ENCODE measurements at regions of chr19 and their contacts with region 1.

Region 1: DNA sequence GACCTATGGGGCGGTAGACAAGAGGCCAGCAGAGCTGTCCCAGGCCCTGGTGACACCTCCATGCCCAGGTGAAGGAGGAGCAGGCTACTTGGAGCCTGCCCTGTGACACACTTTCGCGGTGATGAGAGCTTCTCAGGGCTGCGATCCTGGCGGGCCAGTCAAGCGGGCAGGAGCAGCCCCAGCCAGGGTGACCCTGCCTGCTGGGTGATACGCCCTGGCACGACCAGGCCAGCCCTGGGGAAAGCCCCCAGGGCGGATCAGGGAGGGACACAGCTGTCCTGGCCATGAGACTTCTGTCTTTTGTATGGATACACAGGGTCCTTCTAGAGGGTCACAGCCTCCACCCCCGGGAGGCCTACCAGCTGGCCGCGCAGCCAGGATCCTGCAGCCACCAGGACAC is 13.0 kb downstream of the DNM2 start:
- DNase-seq: peak in 2 of 14 experiments; percentile 31 to 52
- ATAC-seq: no peak
- H3K4me3 ChIP-seq: no peak overlapping the region
- H3K4me3 Mint-ChIP-seq: peak overlapping the region; percentile 34
- H3K27ac ChIP-seq: peak overlapping the region; percentile 73 to 80
- H3K27ac Mint-ChIP-seq: peak overlapping the region; percentile 99
- H3K4me1 ChIP-seq: peaks cover 68% of the 10 kb centered on the region
- H3K4me1 Mint-ChIP-seq: peaks cover 49% of the 10 kb centered on the region
- H3K27me3 ChIP-seq: no peaks in the 10 kb centered on the region
- H3K27me3 Mint-ChIP-seq: no peaks in the 10 kb centered on the region
- CTCF ChIP-seq: no peak

Region 2: DNA sequence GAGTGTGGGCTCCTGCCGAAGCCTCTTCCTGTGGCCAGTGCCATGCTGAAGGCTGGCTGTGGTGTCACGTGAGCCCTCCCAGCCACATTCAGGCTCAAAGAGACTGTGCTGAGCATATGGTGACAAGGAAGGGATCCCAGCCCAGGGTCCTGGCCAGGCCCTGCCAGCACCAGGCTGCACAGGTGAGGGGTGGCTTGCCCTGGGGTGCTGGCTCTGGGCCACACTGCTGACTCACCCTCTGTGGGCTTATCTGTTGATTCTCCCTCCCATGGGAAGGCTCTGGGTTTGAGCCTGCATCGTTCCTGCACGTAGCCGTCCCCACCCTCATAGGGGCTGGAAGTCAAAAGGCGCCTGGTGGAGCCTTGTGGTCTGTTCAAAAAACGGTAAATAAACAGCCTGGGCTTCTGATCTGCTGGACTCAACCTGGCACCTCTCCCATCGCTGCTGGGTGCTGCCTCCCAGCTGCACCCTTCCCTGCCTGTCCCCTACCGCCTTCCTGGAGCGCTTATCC is 18.1 kb after region 1 on chr19:
- CTCF ChIA-PET with region 1: no interaction called
- POLR2A ChIA-PET with region 1: interaction called, 4 read pairs
- intact Hi-C with region 1: loop called in 1 of 2 experiments (anchors 2 kb)
- DNase-seq: peak in 2 of 14 experiments; percentile 15 to 35
- ATAC-seq: no peak
- H3K4me3 ChIP-seq: no peak overlapping the region
- H3K4me3 Mint-ChIP-seq: no peak overlapping the region
- H3K27ac ChIP-seq: peak overlapping the region in 1 of 2 donors; percentile 30
- H3K27ac Mint-ChIP-seq: peak overlapping the region; percentile 96
- H3K4me1 ChIP-seq: peaks cover 84% of the 10 kb centered on the region
- H3K4me1 Mint-ChIP-seq: peaks cover 83% of the 10 kb centered on the region
- H3K27me3 ChIP-seq: no peaks in the 10 kb centered on the region
- H3K27me3 Mint-ChIP-seq: no peaks in the 10 kb centered on the region
- CTCF ChIP-seq: no peak

Region 3: DNA sequence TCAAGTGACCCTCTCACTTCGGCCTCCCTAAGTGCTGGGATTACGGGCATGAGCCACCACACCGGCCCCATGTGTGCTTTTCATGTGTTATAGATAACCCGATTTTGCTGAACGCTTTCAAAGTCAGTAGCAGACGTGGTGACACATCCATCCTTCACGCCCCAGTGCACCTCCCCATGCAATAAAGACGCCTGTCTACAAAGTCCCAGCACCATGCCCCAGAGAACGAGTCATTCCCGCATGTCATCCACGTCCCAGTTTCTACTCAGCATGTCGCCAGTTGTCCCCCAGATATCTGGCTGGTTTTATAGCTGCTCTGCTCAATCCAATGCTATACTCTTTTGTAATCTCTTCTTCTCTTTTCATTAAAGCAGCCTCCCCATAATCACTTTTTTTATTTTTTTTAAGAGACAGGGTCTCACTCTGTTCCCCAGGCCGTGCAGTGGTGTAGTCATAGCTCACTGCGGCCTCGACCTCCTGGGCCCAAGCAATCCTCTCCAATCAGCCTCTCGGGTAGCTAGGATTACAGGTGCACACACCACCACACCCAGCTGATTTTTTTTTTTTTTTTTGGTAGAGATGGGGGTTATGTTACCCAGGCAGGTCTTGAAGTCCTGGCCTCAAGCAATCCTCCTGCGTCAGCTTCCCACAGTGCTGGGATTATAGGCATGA is 29.5 kb after region 1 on chr19:
- CTCF ChIA-PET with region 1: no interaction called
- POLR2A ChIA-PET with region 1: interaction called, 10 read pairs
- intact Hi-C with region 1: loop called in 1 of 2 experiments (anchors 1 kb)
- DNase-seq: peak in 7 of 14 experiments; percentile 21 to 67 (median 53)
- ATAC-seq: peak; percentile 27
- H3K4me3 ChIP-seq: peak overlapping the region; percentile 34
- H3K4me3 Mint-ChIP-seq: peak overlapping the region; percentile 67
- H3K27ac ChIP-seq: peak overlapping the region; percentile 60 to 91
- H3K27ac Mint-ChIP-seq: peak overlapping the region; percentile 93
- H3K4me1 ChIP-seq: peaks cover 94% of the 10 kb centered on the region
- H3K4me1 Mint-ChIP-seq: peaks cover 87% of the 10 kb centered on the region
- H3K27me3 ChIP-seq: no peaks in the 10 kb centered on the region
- H3K27me3 Mint-ChIP-seq: no peaks in the 10 kb centered on the region
- CTCF ChIP-seq: no peak

Region 4: DNA sequence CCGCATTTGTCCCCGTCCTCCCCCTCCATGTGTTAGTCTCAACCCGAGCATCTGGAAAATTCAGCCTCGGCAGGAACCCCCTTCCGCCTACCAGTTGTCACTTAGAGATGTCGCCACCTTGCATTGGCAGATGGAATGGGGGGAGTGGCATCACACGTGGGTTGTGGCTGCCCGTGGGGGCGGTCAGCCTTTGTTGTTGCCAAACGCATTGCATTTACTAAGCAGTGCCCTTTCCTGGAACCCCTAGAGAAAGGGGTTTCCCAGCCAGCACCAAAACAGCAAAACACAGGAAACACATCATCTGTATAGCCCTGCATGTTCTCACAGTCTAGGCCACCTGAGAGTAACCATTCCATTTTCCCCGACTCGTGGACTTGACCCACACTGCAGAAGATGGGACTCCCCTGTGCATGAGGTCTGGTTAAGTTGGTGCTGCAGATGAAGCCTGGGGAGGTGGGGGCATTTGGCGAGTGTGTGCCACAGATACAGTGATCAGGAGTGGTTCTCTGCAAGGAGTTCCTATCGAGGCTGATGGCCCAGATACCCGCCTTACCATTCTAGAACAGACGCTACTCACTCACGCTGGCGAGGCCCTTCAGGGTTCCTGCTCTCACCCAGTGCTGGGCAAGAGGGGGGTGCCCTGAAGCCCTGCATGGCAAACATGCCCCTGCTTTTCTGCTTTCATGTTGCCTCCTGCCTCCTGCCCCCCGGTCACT is 66.8 kb after region 1 on chr19:
- CTCF ChIA-PET with region 1: interaction called, 3 read pairs
- POLR2A ChIA-PET with region 1: no interaction called
- intact Hi-C with region 1: loop called in 1 of 2 experiments (anchors 1 kb)
- DNase-seq: peak; percentile 52 to 94 (median 74)
- ATAC-seq: peak; percentile 85
- H3K4me3 ChIP-seq: peak overlapping the region; percentile 31
- H3K4me3 Mint-ChIP-seq: peak overlapping the region; percentile 68
- H3K27ac ChIP-seq: peak overlapping the region; percentile 59 to 86
- H3K27ac Mint-ChIP-seq: peak overlapping the region; percentile 93
- H3K4me1 ChIP-seq: peaks cover 40% of the 10 kb centered on the region
- H3K4me1 Mint-ChIP-seq: peaks cover 16% of the 10 kb centered on the region
- H3K27me3 ChIP-seq: no peaks in the 10 kb centered on the region
- H3K27me3 Mint-ChIP-seq: no peaks in the 10 kb centered on the region
- CTCF ChIP-seq: no peak

Measured in CD4-positive, alpha-beta T cell (primary cell).